ENCODE measurements at regions of chr12 and their contacts with region 1.

Region 1: DNA sequence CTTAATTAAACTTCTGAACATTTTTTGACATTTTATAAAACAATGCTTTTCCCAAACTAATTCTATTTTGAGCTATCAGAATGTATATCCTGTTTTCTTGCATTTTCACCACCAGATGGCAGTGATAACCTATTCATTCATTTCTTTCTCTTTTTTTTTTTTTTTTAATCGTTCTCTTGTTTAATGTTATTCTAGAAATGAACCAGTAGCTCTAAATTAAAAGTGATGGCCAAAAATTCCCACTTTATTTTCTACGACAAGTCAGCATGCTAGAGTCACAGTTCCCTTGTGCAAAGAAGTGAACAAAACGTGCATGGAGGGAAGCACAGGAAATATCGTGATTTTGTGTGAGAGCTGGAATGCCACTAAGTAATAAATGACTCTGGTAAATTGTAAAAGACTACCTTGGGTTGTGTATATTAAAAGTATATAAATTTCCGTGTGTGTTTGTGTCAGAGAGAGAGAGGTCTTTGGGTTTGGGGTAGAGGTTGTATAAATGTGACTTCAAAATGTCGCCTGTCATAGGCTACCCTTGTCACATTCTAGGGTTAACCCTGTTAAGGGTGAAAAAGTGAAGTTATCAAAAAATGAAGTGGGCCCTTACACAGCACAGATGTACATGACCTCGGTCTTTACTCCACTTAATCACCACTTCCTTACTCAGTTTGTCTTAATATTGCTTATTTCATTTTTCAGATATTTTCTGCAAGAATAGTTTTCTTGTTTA is 40.4 kb upstream of the LDHB start:
- DNase-seq: no peak
- ATAC-seq: peak; percentile 56 to 77 (median 69)
- H3K4me3 ChIP-seq: peak overlapping the region in 1 of 4 donors; percentile 19
- H3K27ac ChIP-seq: no peak overlapping the region
- H3K4me1 ChIP-seq: no peaks in the 10 kb centered on the region
- H3K27me3 ChIP-seq: no peaks in the 10 kb centered on the region
- CTCF ChIP-seq: peak in 3 of 4 donors; percentile 30 to 66 (median 39)

Region 2: DNA sequence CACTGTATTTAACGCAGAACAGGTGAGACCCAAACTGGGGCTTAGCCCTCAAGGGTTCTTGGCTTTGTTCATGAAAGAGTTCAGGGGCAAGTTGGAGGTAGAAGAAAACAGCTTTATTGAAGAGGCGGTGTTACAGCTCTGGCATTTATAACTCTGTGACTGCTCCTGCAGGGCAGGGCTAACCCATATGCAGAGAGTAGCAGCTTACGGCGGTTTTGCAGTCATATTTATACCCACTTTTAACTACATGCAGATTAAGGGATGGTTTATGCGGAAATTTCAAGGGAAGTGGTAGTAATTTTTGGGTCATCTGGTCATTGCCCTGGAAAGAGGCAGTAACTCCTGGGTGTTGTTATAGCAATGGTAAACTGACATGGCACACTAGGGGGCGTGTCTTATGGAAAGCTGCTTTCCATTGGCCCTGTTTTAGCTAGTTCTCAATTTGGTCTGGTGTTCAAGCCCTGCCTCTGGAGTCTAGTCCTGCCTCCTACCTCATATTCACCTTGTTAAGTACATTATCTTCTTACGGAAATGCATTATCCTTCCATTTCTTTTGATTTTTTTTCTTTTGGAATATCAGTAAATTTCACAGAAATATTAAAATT is 327.1 kb before region 1 on chr12:
- intact Hi-C with region 1: no loop called
- DNase-seq: no peak
- ATAC-seq: no peak
- H3K4me3 ChIP-seq: no peak overlapping the region
- H3K27ac ChIP-seq: no peak overlapping the region
- H3K4me1 ChIP-seq: no peaks in the 10 kb centered on the region
- H3K27me3 ChIP-seq: no peaks in the 10 kb centered on the region
- CTCF ChIP-seq: no peak

Region 3: GRCh38 chr12:21607701-21608100 is 90.4 kb before region 1 on chr12:
- intact Hi-C with region 1: no loop called
- DNase-seq: no peak
- ATAC-seq: peak; percentile 48 to 84 (median 76)
- H3K4me3 ChIP-seq: no peak overlapping the region
- H3K27ac ChIP-seq: no peak overlapping the region
- H3K4me1 ChIP-seq: peaks cover 0 to 7% (median under 1%) of the 10 kb centered on the region in 3 donors
- H3K27me3 ChIP-seq: no peaks in the 10 kb centered on the region
- CTCF ChIP-seq: peak in 2 of 4 donors; percentile 20 to 30

Region 4: GRCh38 chr12:21989819-21990412 is 291.8 kb after region 1 on chr12:
- intact Hi-C with region 1: loop called in 1 of 3 experiments (anchors 10 kb)
- DNase-seq: no peak
- ATAC-seq: peak in 3 of 4 donors; percentile 74 to 77 (median 76)
- H3K4me3 ChIP-seq: no peak overlapping the region
- H3K27ac ChIP-seq: no peak overlapping the region
- H3K4me1 ChIP-seq: peaks cover 0 to 6% (median 6%) of the 10 kb centered on the region in 3 donors
- H3K27me3 ChIP-seq: no peaks in the 10 kb centered on the region
- CTCF ChIP-seq: peak in 3 of 4 donors; percentile 10 to 40 (median 38)

Region 5: GRCh38 chr12:22018860-22019259 is 320.8 kb after region 1 on chr12:
- intact Hi-C with region 1: loop called in 2 of 3 experiments (anchors 5 to 10 kb)
- DNase-seq: no peak
- ATAC-seq: peak in 3 of 4 donors; percentile 63 to 71 (median 64)
- H3K4me3 ChIP-seq: no peak overlapping the region
- H3K27ac ChIP-seq: no peak overlapping the region
- H3K4me1 ChIP-seq: no peaks in the 10 kb centered on the region
- H3K27me3 ChIP-seq: no peaks in the 10 kb centered on the region
- CTCF ChIP-seq: peak in 3 of 4 donors; percentile 21 to 33 (median 22)